ENCODE measurements at regions of chr11 and their contacts with region 1.

Region 1: GRCh38 chr11:9739123-9739894 is 75.4 kb downstream of the SWAP70 start:
- DNase-seq: peak; percentile 77
- ATAC-seq: peak; percentile 85
- H3K4me3 ChIP-seq: no peak overlapping the region
- H3K4me3 Mint-ChIP-seq: peak overlapping the region; percentile 84
- H3K27ac ChIP-seq: peak overlapping the region; percentile 70 to 94
- H3K27ac Mint-ChIP-seq: peak overlapping the region; percentile 98
- H3K4me1 ChIP-seq: peaks cover 53 to 57% of the 10 kb centered on the region in 2 donors
- H3K4me1 Mint-ChIP-seq: peaks cover 67% of the 10 kb centered on the region
- H3K27me3 ChIP-seq: no peaks in the 10 kb centered on the region
- H3K27me3 Mint-ChIP-seq: no peaks in the 10 kb centered on the region
- CTCF ChIP-seq: no peak

Region 2: GRCh38 chr11:9663699-9664275 is 75.5 kb before region 1 on chr11 and contains the start of gene SWAP70:
- CTCF ChIA-PET with region 1: no interaction called
- POLR2A ChIA-PET with region 1: interaction called, 3 read pairs
- intact Hi-C with region 1: loop called (anchors 2 kb)
- DNase-seq: peak; percentile 93
- ATAC-seq: peak; percentile 85
- H3K4me3 ChIP-seq: peak within 1 kb of the TSS; percentile 83 to 100 (median 94)
- H3K4me3 Mint-ChIP-seq: peak within 1 kb of the TSS; percentile 94
- H3K27ac ChIP-seq: peak within 1 kb of the TSS; percentile 84 to 95
- H3K27ac Mint-ChIP-seq: peak within 1 kb of the TSS; percentile 88
- H3K4me1 ChIP-seq: peaks cover 47 to 50% of the 10 kb centered on the region in 2 donors
- H3K4me1 Mint-ChIP-seq: peaks cover 63% of the 10 kb centered on the region
- H3K27me3 ChIP-seq: no peaks in the 10 kb centered on the region
- H3K27me3 Mint-ChIP-seq: no peaks in the 10 kb centered on the region
- CTCF ChIP-seq: no peak
- total RNA-seq, gene SWAP70: 200 and 203 TPM in 2 replicates

Region 3: GRCh38 chr11:9688716-9689511 is 50.4 kb before region 1 on chr11:
- CTCF ChIA-PET with region 1: interaction called, 6 read pairs
- POLR2A ChIA-PET with region 1: interaction called, 8 read pairs
- intact Hi-C with region 1: loop called (anchors 2 kb)
- DNase-seq: peak; percentile 78
- ATAC-seq: peak; percentile 74
- H3K4me3 ChIP-seq: peak overlapping the region in 4 of 5 experiments; percentile 7 to 50 (median 26)
- H3K4me3 Mint-ChIP-seq: no peak overlapping the region
- H3K27ac ChIP-seq: peak overlapping the region; percentile 91 to 96
- H3K27ac Mint-ChIP-seq: no peak overlapping the region
- H3K4me1 ChIP-seq: peaks cover 85 to 88% of the 10 kb centered on the region in 2 donors
- H3K4me1 Mint-ChIP-seq: peaks cover 60% of the 10 kb centered on the region
- H3K27me3 ChIP-seq: no peaks in the 10 kb centered on the region
- H3K27me3 Mint-ChIP-seq: no peaks in the 10 kb centered on the region
- CTCF ChIP-seq: no peak

Region 4: DNA sequence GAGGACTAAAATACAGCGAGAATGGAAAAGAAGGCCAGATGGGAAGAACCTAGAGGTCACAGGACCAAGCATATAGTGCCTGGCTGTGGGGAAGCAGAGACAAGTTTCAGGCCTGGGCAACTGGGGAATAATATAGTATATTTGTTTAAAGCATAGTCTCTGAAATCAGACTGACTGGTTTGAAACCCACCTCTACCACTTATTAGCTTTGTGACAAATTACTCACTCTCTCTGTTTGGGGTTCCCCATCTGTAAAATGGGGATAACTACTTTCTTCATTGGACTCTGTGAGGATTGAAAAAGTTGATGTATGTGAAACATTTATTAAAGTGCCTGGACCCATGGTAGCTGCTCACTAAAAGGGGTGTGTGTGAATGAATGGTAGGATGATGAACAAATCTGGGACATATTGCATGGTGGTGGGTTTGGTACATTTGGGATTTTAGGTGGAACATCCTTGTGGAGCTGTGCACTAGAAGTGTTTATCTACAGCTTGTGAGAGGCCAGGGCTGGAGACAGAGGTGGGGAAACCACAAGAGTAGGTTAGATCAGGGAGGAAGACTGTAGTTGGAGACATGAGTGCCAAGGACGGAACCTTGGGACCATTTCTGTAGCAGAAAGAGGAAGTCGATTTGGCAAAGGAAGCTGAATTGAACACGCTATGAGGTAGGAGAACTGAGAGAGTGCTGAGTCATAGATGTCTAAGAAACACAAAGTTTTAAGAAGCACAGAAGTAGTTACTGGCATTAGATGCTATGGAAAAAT is 22.9 kb before region 1 on chr11:
- CTCF ChIA-PET with region 1: interaction called, 5 read pairs
- POLR2A ChIA-PET with region 1: interaction called, 4 read pairs
- intact Hi-C with region 1: loop called (anchors 2 kb)
- DNase-seq: peak; percentile 79
- ATAC-seq: peak; percentile 69
- H3K4me3 ChIP-seq: no peak overlapping the region
- H3K4me3 Mint-ChIP-seq: peak overlapping the region; percentile 58
- H3K27ac ChIP-seq: peak overlapping the region; percentile 60 to 66
- H3K27ac Mint-ChIP-seq: peak overlapping the region; percentile 90
- H3K4me1 ChIP-seq: peaks cover 82 to 91% of the 10 kb centered on the region in 2 donors
- H3K4me1 Mint-ChIP-seq: peaks cover 77% of the 10 kb centered on the region
- H3K27me3 ChIP-seq: no peaks in the 10 kb centered on the region
- H3K27me3 Mint-ChIP-seq: no peaks in the 10 kb centered on the region
- CTCF ChIP-seq: no peak